Right cardiac atrium (tissue), 5 donors: ENCODE measurements at regions of chr16 and their contacts with region 1.

Region 1: DNA sequence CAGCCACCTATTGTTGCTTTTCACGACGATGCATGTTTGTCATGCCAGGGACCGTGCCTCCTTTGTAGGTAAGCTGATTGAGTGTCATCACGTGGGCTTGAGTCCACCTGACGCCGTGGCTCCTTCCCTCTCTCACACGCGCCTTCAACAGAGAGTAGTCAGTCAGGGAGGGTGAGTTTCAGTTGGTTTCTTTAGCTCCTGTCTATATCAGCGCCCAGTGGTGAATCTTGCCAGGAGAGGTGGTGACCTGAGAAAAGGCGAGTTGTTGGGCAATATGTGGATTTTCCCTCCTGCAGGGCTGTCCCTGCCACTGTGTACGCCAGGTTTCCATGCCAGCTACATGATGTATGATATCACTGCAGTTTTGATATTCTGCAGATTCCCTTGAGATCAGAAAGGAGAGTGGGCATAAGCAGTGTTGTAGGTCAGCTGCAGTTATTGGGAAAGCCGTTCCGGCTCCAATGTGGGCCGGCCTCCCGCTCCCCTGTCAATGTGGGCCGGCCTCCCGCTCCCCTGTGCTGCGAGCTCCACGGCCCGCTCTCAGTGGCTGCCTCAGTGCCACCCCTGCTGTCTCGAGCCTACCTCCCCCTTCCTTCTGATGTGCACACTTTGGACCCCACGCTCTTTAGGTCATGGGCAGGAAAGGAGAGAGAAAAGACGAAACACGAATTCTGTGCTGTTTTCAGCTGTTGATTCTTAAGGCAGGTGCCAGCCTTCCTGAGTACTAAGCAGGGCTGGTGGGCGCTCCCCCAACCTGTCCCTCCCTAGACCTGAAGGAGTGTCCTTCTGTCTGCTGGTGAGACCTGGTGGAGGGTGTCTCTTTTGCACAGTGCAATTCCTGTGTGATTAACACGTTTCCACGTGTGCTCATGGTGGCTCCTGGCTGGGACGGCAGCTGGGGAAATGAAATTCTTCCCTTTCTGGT is 31.5 kb downstream of the BANP start:
- DNase-seq: no peak
- ATAC-seq: peak in 1 of 2 donors; percentile 7
- H3K4me3 ChIP-seq: no peak overlapping the region
- H3K27ac ChIP-seq: no peak overlapping the region
- H3K4me1 ChIP-seq: no peaks in the 10 kb centered on the region
- H3K27me3 ChIP-seq: no peaks in the 10 kb centered on the region

Region 2: GRCh38 chr16:88437373-88437964 is 454.7 kb after region 1 on chr16:
- intact Hi-C with region 1: loop called in 2 of 4 experiments (anchors 10 kb)
- DNase-seq: peak; percentile 61 to 85 (median 80)
- ATAC-seq: peak; percentile 6 to 32
- H3K4me3 ChIP-seq: no peak overlapping the region
- H3K27ac ChIP-seq: no peak overlapping the region
- H3K4me1 ChIP-seq: no peaks in the 10 kb centered on the region
- H3K27me3 ChIP-seq: no peaks in the 10 kb centered on the region